Transverse colon (tissue), 4 donors: ENCODE measurements at regions of chr12 and their contacts with region 1.

Region 1: GRCh38 chr12:105555556-105556295 is 225.2 kb downstream of the C12orf75 start:
- DNase-seq: no peak
- H3K4me3 ChIP-seq: no peak overlapping the region
- H3K27ac ChIP-seq: no peak overlapping the region
- H3K4me1 ChIP-seq: no peaks in the 10 kb centered on the region
- H3K27me3 ChIP-seq: no peaks in the 10 kb centered on the region
- CTCF ChIP-seq: no peak
- EP300 ChIP-seq: no peak
- POLR2A ChIP-seq: no peak

Region 2: GRCh38 chr12:105522156-105522825 is 33.4 kb before region 1 on chr12:
- in situ Hi-C with region 1: no loop called
- intact Hi-C with region 1: loop called (anchors 1 kb)
- DNase-seq: no peak
- H3K4me3 ChIP-seq: no peak overlapping the region
- H3K27ac ChIP-seq: no peak overlapping the region
- H3K4me1 ChIP-seq: peaks cover 0 to 7% (median 3%) of the 10 kb centered on the region in 4 donors
- H3K27me3 ChIP-seq: no peaks in the 10 kb centered on the region
- CTCF ChIP-seq: no peak
- EP300 ChIP-seq: no peak
- POLR2A ChIP-seq: no peak